Cardiac septum (tissue), 1 donor: ENCODE measurements at regions of chr2 and their contacts with region 1.

Region 1: DNA sequence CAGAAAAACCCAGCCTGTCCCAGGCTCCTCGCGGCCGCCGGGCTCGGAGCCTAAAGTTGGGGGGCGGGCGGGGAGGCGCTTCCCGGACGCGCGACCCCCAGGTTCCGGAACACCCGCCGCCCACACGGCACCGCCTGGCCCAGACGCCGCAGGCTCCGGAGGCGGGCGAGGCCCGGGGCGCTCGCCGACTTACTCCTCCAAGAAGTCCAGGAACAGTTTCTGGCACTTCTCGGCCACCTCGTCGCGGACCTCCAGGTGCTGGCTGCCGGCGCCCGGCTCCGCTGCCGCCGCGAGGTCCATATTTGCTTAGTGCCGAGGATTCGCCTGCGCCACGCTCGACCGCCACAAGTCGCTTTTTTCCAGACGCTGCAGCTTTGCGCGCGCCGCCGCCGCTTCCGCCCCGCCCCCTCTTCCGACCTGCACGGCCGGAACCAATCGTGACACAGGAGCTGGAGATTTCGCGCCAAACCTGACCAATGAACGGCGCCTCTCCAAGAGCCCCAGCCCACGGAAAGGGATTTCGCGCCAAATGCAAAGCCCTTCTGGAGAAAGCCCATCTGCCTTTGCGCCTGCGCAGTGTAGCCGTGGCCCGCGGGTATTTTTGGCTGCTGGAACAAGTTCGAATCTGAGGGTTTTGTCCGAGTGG is at the start of gene MCM6:
- DNase-seq: peak; percentile 98
- total RNA-seq, gene MCM6: 6.5 TPM

Region 2: GRCh38 chr2:135741395-135742324 is 134.5 kb before region 1 on chr2 and contains the start of gene UBXN4:
- intact Hi-C with region 1: loop called (anchors 5 kb)
- DNase-seq: peak; percentile 98
- total RNA-seq, gene UBXN4: 65.6 TPM